ENCODE measurements at regions of chr16 and their contacts with region 1.

Region 1: DNA sequence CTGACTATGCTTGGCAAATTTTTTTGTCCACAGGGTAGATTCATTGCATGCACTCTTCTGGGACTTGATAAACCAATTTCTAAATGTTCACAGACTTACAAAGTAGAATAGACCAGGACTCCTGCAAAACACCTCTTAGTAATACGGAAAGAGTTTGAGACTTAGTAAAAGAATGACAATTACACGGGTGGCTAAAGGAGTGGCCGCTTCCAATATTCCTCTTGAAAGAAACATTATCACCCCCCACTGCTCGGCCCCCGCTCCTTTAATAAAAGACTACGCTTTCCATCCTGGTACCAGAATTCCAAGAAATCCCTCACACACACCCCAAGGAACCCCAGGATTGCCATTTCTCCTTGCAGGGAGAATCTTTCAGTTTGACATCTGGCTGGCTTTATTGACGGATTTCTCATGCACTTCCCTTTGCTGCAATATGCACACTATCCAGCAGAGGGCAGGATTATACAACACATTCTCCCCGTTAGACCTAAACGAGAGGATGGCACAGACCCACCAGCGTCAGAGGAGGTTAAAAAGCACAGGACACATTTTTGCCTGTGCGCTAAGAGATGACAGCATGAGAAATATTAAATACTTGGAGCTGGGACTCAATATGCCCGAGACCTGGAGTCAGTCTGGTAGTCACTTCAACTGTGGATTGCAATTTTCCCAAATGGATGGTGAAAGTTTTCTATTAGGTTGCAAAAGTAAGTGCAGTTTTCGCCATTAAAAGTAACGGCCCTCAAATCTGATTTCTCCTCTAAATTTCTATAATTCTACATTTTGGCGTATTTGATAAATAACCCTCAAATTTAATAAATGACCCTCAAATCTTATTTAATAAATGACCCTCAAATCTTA is 46.6 kb upstream of the NUDT7 start:
- DNase-seq: no peak
- ATAC-seq: peak; percentile 62
- H3K4me3 Mint-ChIP-seq: no peak overlapping the region
- H3K27ac Mint-ChIP-seq: no peak overlapping the region
- H3K4me1 Mint-ChIP-seq: peaks cover 8% of the 10 kb centered on the region
- H3K27me3 Mint-ChIP-seq: no peaks in the 10 kb centered on the region
- CTCF ChIP-seq: peak; percentile 32

Region 2: DNA sequence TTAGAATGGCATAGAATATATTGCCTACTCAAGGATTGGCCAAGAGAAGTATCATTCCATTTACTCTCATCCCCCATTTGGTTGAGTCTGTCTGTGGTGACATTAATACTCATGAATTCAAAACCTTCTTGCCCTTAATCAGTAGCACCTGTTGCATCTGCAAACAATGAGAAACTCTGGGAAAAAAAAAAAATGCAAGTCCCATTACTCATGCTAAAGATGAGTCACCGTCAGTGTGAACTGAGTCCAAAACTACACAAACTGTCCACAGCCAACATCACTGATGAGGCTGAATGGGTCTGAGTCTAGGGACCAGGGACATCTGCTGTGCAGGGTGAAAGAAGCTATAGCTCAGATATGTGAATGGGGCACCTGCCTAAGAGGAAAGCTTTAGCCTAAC is 143.9 kb before region 1 on chr16:
- CTCF ChIA-PET with region 1: no interaction called
- POLR2A ChIA-PET with region 1: no interaction called
- intact Hi-C with region 1: no loop called
- DNase-seq: no peak
- ATAC-seq: no peak
- H3K4me3 Mint-ChIP-seq: no peak overlapping the region
- H3K27ac Mint-ChIP-seq: no peak overlapping the region
- H3K4me1 Mint-ChIP-seq: no peaks in the 10 kb centered on the region
- H3K27me3 Mint-ChIP-seq: no peaks in the 10 kb centered on the region
- CTCF ChIP-seq: no peak

Region 3: DNA sequence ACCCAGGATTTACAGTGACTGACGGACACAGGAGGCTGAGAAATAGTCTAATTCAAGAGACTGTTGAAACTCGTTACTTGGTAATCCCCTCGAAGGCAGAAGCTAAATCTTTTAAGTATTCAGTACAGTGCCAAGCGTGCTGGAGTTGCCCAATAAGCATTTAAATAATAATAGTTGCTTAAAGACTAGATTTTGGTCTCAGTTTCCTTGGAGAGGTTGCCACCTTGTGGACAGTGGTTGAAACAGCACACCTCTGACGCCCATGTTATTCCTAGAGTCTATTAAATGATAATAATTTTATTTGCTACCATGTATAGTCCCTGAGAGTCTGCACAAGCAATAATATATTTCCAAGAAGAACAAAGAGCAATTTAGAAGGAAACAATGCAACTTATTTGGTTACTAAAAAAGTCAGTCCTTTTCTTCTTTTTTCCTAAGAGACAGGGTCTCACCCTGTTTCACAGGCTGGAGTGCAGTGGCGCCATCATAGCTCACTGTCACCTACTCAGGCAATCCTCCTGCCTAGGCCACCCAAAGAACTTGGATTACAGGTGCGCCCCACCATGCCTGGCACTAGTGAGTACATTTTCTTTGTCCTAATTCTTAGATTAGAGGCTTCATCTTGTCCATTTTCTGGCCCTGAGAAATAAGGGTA is 91.4 kb before region 1 on chr16:
- CTCF ChIA-PET with region 1: no interaction called
- POLR2A ChIA-PET with region 1: no interaction called
- intact Hi-C with region 1: no loop called
- DNase-seq: no peak
- ATAC-seq: peak; percentile 42
- H3K4me3 Mint-ChIP-seq: no peak overlapping the region
- H3K27ac Mint-ChIP-seq: no peak overlapping the region
- H3K4me1 Mint-ChIP-seq: no peaks in the 10 kb centered on the region
- H3K27me3 Mint-ChIP-seq: peaks cover 9% of the 10 kb centered on the region
- CTCF ChIP-seq: peak; percentile 90

Region 4: DNA sequence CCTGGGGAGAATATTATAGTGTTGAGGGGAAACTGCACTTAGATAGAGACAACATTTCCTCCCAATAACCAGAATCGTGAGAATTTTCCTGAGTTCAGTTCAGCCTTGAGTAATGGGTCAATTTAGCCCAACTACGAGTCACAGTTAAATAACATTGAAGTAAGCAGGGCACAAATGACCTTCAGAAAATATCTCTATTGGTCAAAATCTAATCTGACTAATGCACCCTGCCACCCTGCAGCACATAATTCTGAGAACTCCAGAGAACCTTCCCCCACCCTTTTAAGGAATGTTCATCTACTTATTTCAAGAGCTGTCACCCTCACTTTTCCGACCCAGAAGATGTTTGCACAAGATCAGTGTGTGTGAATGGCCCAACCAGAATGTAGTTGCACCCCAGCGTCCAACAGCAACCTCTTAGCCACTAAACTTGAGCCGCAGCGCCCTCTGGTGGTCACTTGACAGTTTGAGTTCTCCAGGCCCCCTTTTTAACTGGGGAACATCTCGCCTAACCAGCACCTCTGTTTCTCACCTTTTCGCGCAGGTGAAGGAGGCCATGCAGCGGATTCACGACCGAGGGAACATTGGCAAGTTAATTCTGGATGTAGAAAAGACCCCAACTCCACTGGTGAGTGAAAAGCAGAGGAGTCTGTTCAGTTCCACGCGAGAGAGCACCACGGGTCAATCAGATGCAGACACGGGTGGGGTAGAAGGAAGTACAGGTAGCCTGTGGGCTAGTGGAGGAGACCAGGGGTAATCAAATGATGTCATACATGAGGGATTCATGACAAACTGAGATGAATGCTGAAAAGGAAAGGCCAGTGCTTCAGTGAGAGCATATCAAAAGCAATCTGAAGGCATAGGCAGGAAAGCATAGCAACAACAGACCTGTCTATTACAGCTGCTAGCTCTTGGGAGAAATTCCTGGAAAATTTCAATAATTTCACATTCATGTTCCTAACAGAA is 295.9 kb after region 1 on chr16:
- CTCF ChIA-PET with region 1: interaction called, 21 read pairs
- POLR2A ChIA-PET with region 1: no interaction called
- intact Hi-C with region 1: loop called (anchors 1 kb)
- DNase-seq: peak; percentile 52
- ATAC-seq: no peak
- H3K4me3 Mint-ChIP-seq: no peak overlapping the region
- H3K27ac Mint-ChIP-seq: no peak overlapping the region
- H3K4me1 Mint-ChIP-seq: no peaks in the 10 kb centered on the region
- H3K27me3 Mint-ChIP-seq: peaks cover 4% of the 10 kb centered on the region
- CTCF ChIP-seq: no peak

Region 5: DNA sequence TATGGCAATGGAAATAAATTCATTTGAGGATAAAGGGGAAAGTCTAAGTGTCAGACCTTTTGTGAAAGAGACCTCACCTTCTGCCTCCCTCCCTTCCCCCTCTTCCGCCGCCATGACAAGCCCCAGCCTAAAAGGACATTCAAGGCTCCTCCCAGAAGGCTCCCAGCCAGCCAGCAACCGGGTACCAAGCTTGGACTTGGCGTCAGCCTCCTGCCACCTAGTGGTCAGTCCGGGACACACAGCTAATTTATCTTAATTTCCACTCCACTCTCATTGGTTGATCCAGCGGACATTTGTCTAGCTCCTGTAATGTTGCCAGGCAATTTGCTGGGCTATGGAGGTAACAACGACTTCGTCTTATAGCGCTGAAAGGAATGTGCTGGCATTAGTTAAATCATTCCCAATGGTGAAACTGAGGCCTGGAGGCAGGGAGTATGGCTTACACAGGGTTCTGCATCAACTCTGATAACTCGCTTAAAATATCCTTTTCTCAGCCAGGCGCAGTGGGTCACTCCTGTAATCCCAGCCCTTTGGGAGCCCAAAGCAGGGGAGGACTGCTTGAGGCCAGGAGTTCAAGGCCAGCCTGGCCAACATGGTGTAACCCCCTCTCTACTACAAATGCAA is 327.3 kb after region 1 on chr16:
- CTCF ChIA-PET with region 1: interaction called, 9 read pairs
- POLR2A ChIA-PET with region 1: no interaction called
- intact Hi-C with region 1: loop called (anchors 1 kb)
- DNase-seq: peak; percentile 22
- ATAC-seq: peak; percentile 78
- H3K4me3 Mint-ChIP-seq: no peak overlapping the region
- H3K27ac Mint-ChIP-seq: no peak overlapping the region
- H3K4me1 Mint-ChIP-seq: no peaks in the 10 kb centered on the region
- H3K27me3 Mint-ChIP-seq: peaks cover 7% of the 10 kb centered on the region
- CTCF ChIP-seq: no peak

Region 6: DNA sequence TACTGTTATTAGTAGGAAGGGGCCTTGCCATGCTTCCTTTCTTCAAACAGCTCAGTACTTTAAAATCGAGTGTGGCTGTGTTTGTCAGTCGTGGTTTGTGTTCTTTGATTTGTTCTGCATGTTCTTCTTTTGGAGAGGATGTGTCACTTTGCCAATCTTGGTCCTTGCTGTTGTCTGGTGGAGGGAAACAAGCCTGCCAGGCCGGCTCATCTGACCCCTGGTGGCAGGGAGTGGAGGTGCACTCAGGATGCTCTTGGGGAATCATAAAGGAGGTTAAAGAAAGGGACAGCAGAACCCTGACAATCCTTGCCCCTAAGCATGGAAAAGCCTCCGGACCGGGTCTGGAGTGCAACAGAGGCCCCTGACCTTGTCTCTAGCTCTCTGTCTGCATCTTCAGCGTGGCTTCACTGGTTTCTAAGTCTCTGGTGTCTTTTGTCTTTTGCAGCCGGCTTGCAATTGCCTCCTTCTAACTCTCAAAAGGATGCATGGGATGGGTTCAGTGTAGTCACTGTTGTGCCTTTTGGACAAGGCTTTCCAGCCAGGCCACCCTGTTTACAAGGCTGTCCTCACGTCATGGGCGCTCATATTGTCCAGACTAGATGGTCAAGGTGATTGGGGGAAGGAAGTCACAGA is 559.6 kb after region 1 on chr16:
- CTCF ChIA-PET with region 1: no interaction called
- POLR2A ChIA-PET with region 1: no interaction called
- intact Hi-C with region 1: loop called (anchors 5 kb)
- DNase-seq: peak; percentile 45
- ATAC-seq: peak; percentile 75
- H3K4me3 Mint-ChIP-seq: no peak overlapping the region
- H3K27ac Mint-ChIP-seq: no peak overlapping the region
- H3K4me1 Mint-ChIP-seq: no peaks in the 10 kb centered on the region
- H3K27me3 Mint-ChIP-seq: no peaks in the 10 kb centered on the region
- CTCF ChIP-seq: peak; percentile 74